Posterior vena cava (tissue), 2 donors: ENCODE measurements at regions of chr3 and their contacts with region 1.

Region 1: DNA sequence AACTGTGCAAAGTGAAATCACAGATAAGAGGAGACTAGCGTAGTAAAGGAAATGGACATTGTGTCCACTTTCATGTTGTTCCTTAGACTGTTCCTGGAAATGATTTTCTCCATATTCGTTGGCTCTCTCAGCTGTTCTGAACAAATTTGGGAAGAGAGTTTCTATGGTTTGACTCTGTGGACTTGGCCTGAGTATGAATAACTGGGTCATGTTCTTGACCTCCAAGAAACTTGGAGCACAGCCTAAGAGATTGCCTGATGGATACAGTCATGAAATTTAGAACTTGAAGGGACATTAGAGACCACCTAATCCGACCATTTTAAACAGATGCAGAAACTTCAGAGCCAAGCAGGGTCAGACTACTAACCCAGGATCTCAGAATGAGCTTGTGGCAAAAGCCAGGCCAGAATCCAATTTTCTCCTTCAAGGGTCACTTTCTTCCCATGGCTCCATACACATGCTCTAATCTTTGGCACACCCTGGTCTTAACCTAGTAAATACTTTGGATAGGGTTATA is 430.4 kb downstream of the RBMS3 start:
- DNase-seq: no peak

Region 2: DNA sequence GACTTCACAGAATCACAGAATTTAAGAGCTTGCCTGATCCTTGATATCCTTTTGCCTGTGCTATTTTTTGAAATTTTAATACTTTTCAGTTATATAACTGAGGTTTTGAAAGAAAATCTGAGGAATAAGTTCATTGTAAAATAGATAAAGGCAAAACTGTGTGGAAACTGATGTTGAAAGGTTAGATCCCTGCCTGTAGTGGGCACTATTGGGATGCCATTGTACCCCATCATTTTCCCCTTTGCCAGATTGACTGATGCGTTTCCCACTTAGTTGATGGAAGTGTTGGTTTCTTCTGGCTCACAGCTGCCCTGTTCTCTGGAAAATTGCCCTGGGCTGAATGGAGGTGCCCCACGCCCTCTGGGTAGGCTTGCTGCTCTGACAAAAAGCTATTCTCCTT is 42.6 kb before region 1 on chr3:
- intact Hi-C with region 1: no loop called
- DNase-seq: no peak

Region 3: DNA sequence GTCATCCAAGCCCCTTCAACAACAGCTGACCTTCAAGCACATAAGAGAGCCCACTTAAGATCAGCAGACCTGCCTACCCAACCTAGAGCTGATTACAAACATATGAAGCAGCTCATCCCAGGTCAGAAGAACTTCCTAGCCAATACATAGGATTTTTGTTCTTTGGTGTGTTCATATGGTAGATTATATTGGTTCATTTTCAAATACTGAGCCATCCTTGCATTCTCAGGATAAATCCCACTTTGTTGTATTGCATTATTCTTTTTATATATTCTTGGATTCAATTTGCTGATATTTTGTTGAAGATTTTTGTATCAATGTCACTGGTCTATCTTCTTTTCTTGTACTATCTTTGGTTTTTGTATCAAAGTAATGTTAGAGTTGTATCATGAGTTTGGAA is 1714.1 kb after region 1 on chr3:
- intact Hi-C with region 1: loop called in 1 of 2 experiments (anchors 5 kb)
- DNase-seq: no peak